ENCODE measurements at regions of chr3 and their contacts with region 1.

Region 1: DNA sequence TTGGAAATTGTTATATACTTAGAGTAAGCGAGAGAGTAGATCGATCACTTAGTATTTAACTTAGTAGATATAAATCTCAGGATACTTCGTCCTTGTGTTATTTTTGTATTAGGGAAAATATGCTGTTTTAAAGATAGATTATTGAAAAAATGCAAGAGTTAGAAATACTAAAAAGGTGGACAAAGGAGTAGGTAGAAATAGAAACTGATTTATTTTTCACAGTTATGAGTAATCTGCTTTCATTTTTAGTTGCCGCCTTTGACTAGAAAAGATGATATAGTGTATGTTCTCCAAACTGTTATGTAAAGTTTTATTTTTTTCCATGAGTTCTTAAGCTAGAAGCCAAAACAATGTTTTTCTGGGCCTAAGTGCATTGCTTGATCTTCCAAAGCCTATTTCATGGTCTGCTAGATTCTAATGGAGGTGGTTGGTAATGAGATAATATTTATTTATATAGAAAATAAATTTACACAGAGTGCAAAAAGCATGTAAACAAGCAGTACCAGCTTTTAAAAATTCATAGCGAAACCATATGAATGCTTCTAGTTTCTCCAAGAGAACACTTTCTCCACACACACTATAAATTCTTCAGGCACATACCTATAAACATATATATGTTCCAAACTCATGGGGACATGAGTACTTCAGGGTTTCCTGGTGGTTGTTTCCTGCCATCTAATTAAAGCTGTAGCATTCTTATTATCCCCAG is 61.1 kb downstream of the DIPK2A start:
- DNase-seq: no peak

Region 2: GRCh38 chr3:143972505-143973255 is 60.0 kb before region 1 on chr3:
- intact Hi-C with region 1: loop called (anchors 5 kb)
- DNase-seq: peak; percentile 32 to 97 (median 72)

Region 3: DNA sequence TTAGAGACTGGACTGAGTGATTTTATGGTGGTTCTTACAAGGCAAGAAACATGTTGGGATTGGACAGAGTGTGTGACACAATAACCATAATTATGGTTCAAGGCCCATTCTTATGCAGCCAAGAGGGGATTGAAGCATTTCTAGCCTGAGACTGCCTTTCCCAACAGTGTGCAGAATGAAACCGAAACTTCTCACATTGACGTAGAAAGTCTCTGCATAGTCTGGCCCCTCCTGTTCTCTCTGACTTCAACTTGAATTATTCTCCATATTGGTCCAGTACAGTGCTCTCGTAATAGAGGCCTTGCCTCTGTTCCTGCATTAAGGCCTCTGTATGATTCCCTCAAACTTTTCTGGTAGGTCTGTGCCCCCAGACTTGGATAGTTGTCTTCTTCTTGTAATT is 77.3 kb after region 1 on chr3:
- intact Hi-C with region 1: loop called (anchors 5 kb)
- DNase-seq: no peak

Measured in posterior cingulate gyrus (tissue), 11 donors.